MCF 10A (cell line): ENCODE measurements at regions of chr1 and their contacts with region 1.

Region 1: DNA sequence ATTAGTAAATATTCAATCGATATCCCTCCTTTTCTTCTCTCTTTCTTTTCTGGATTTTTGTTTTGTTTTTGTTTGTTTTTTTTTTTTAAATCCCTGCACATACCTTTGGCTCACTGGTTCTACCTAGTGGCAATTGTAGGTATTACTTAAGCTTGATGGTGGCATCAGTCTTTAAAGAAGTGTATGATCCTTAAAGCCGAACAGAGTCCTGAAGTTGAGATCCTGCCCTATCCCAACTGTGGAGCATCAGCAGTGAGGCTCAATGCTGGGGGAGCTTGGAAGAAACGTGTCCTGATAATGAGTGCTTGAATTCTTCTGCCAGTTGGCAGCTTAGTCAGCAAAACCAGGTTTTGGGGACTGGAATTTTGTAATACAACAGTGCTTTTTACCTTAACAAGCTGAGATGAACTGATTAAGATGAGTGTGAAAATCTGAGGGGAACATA is 60.8 kb downstream of the FASLG start:
- DNase-seq: peak; percentile 75
- H3K4me3 Mint-ChIP-seq: peak overlapping the region; percentile 3
- H3K27ac Mint-ChIP-seq: no peak overlapping the region
- H3K4me1 Mint-ChIP-seq: peaks cover 35% of the 10 kb centered on the region
- H3K27me3 Mint-ChIP-seq: no peaks in the 10 kb centered on the region
- CTCF ChIP-seq: peak; percentile 94

Region 2: DNA sequence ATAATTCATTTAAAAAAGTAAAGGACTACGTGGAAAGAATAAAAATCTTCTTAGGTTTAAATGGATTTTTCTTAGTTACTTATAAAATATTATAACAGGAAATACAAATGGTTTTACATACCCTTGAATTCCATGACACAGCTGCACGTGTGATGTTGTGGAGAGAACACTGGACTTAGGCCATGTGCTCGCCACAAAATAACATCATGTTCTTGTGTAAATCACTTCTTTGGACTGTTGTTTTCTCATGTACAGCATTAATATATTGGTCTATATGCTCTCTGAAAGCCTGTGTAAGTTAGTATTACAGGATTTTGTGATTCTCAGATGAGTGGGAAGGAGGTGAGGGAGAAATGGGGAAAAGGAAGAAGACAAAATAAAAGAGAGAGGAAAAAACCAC is 650.2 kb before region 1 on chr1:
- CTCF ChIA-PET with region 1: no interaction called
- POLR2A ChIA-PET with region 1: no interaction called
- intact Hi-C with region 1: no loop called
- DNase-seq: no peak
- H3K4me3 Mint-ChIP-seq: no peak overlapping the region
- H3K27ac Mint-ChIP-seq: peak overlapping the region; percentile 63
- H3K4me1 Mint-ChIP-seq: peaks cover 7% of the 10 kb centered on the region
- H3K27me3 Mint-ChIP-seq: no peaks in the 10 kb centered on the region
- CTCF ChIP-seq: no peak

Region 3: DNA sequence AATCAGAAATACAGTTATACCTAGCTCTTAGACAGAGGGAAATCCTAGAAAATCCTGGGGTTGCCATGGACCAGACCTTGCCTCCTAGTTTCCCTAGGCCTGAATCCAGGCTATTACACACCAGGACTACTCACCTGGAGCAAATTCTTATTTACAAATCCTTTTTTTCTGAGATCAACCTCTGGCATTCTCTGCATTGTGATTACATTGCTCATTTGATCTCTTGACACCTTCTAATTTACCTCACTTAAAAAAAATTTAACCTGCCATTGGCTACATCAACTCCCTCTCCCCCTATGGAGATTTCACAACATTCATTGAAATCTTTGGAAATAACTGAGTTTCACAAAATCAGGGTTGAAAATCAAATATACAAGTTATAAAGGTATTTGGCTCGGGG is 302.2 kb before region 1 on chr1:
- CTCF ChIA-PET with region 1: interaction called, 10 read pairs
- POLR2A ChIA-PET with region 1: no interaction called
- intact Hi-C with region 1: no loop called
- DNase-seq: peak; percentile 30
- H3K4me3 Mint-ChIP-seq: no peak overlapping the region
- H3K27ac Mint-ChIP-seq: no peak overlapping the region
- H3K4me1 Mint-ChIP-seq: peaks cover 7% of the 10 kb centered on the region
- H3K27me3 Mint-ChIP-seq: no peaks in the 10 kb centered on the region
- CTCF ChIP-seq: no peak

Region 4: GRCh38 chr1:172449585-172450534 is 269.9 kb before region 1 on chr1:
- CTCF ChIA-PET with region 1: interaction called, 89 read pairs
- POLR2A ChIA-PET with region 1: interaction called, 10 read pairs
- intact Hi-C with region 1: loop called (anchors 1 kb)
- DNase-seq: peak; percentile 85
- H3K4me3 Mint-ChIP-seq: no peak overlapping the region
- H3K27ac Mint-ChIP-seq: peak overlapping the region; percentile 44
- H3K4me1 Mint-ChIP-seq: peaks cover 28% of the 10 kb centered on the region
- H3K27me3 Mint-ChIP-seq: no peaks in the 10 kb centered on the region
- CTCF ChIP-seq: peak; percentile 97

Region 5: GRCh38 chr1:172582893-172583292 is 136.8 kb before region 1 on chr1:
- CTCF ChIA-PET with region 1: interaction called, 7 read pairs
- POLR2A ChIA-PET with region 1: interaction called, 5 read pairs
- intact Hi-C with region 1: loop called (anchors 1 kb)
- DNase-seq: peak; percentile 51
- H3K4me3 Mint-ChIP-seq: no peak overlapping the region
- H3K27ac Mint-ChIP-seq: peak overlapping the region; percentile 6
- H3K4me1 Mint-ChIP-seq: peaks cover 28% of the 10 kb centered on the region
- H3K27me3 Mint-ChIP-seq: no peaks in the 10 kb centered on the region
- CTCF ChIP-seq: peak; percentile 14

Region 6: GRCh38 chr1:172630056-172630818 is 89.5 kb before region 1 on chr1:
- CTCF ChIA-PET with region 1: interaction called, 13 read pairs
- POLR2A ChIA-PET with region 1: interaction called, 3 read pairs
- intact Hi-C with region 1: no loop called
- DNase-seq: peak; percentile 38
- H3K4me3 Mint-ChIP-seq: no peak overlapping the region
- H3K27ac Mint-ChIP-seq: peak overlapping the region; percentile 68
- H3K4me1 Mint-ChIP-seq: peaks cover 18% of the 10 kb centered on the region
- H3K27me3 Mint-ChIP-seq: no peaks in the 10 kb centered on the region
- CTCF ChIP-seq: no peak